Stomach (tissue), 19 donors: ENCODE measurements at regions of chr15 and their contacts with region 1.

Region 1: DNA sequence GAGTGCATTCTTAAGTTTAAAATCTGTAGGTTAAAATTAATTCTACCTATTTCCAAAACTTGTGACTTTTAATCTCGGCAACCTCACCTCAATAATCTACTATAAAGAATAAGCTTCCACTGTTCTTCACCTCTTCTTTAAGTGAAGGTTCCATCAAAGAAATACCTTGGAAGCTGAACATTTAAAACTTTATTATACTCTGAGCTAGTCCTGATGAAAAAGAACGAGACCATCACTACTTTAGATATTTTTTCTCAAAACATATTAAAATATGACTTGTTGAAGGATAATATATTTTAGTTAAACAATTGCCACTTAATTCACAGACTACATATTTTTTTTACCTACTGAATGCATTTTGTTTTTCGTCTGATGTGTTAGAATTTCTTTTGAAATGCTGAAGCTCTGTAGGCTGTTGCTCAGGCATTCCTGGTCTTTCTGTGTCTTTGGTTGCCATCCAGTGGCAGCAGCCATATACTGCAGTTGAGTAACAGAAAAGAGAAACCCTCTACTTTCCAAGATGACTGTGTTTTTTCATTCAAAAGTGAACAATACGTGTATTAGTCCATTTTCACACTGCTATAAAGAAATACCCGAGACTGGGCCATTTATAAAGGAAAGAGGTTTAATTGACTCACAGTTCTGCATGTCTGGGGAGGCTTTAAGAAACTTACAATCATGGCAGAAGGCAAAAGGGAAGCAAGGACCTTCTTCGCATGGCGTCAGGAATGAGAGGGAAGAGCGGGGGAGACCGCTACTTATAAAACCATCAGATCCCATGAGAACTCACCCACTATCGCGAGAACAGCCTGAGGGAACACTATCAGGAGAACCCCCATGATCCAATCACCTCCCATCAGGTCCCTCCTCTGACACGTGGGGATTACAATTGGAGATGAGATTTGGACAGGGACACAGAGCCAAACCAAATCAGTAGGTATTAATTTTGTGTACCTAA is 4.5 kb upstream of the GOLGA8B start:
- DNase-seq: peak; percentile 64 to 79
- H3K4me3 ChIP-seq: peak overlapping the region; percentile 20 to 27 (median 22)
- H3K27ac ChIP-seq: no peak overlapping the region
- H3K4me1 ChIP-seq: peaks cover 5 to 16% (median 12%) of the 10 kb centered on the region in 4 donors
- H3K27me3 ChIP-seq: peaks cover 0 to 14% (median 0%) of the 10 kb centered on the region in 3 donors
- CTCF ChIP-seq: peak in 5 of 7 experiments; percentile 55 to 72 (median 68)
- EP300 ChIP-seq: no peak
- POLR2A ChIP-seq: no peak

Region 2: DNA sequence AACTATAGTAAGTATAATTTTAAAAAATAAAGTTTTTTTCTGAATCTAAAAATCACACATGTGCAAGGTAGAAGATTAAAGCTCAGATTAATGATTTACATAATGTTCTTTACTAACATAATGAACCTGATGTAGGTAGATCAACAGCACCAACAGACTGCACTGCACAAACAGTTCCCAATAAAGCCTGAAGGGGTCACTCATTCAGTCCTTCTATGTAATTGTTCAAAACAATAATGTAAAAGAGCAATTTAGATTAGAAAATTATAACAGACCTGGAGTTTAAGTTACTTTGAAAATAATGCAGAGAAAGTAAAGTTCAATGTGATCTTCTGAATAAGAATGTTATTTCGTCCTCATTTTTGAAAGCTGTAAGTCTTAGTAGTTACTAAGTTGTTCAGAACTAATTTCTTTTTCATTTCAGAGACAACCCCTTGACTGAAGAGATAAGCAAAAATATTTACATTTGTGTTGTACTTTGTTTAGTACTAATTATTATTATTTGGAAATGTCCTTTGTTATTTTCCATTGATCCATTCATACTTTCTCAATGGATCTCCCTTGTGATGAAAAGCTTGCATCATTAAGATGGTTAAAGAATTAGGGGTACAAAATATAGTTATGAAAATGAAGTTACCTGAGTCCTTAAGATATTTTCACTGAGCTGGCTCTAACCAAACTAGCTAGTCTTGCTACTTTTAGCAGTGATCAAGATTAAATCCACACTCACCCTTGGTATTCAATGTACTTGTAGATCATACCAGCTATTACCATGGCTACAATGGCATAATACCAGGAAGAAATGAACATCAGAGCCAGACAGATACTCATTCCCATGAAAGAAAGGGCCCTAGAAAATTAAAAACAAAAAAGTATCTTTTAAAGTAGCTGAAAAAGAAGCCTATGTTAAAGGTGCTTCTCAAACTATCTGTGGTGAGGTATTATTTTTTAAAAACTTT is 346.3 kb before region 1 on chr15:
- intact Hi-C with region 1: loop called (anchors 10 kb)
- DNase-seq: peak in 1 of 2 donors; percentile 70
- H3K4me3 ChIP-seq: no peak overlapping the region
- H3K27ac ChIP-seq: no peak overlapping the region
- H3K4me1 ChIP-seq: no peaks in the 10 kb centered on the region
- H3K27me3 ChIP-seq: no peaks in the 10 kb centered on the region
- CTCF ChIP-seq: peak in 5 of 7 experiments; percentile 57 to 77 (median 70)
- EP300 ChIP-seq: no peak
- POLR2A ChIP-seq: no peak

Region 3: GRCh38 chr15:34342737-34343575 is 245.0 kb before region 1 on chr15 and contains the starts of genes NOP10 and NUTM1:
- intact Hi-C with region 1: loop called (anchors 10 kb)
- DNase-seq: peak; percentile 88 to 97
- H3K4me3 ChIP-seq: peak within 1 kb of the TSS; percentile 60 to 66 (median 64)
- H3K27ac ChIP-seq: peak within 1 kb of the TSS; percentile 77 to 95 (median 90)
- H3K4me1 ChIP-seq: peaks cover 15 to 39% (median 30%) of the 10 kb centered on the region in 4 donors
- H3K27me3 ChIP-seq: no peaks in the 10 kb centered on the region
- CTCF ChIP-seq: peak in 6 of 7 experiments; percentile 64 to 96 (median 92)
- EP300 ChIP-seq: no peak
- POLR2A ChIP-seq: peak in 1 of 4 donors; percentile 69
- total RNA-seq, gene NOP10: 2.9 to 388 (median 118) TPM
- total RNA-seq, gene NUTM1: not detected

Region 4: GRCh38 chr15:34693053-34693744 is 105.2 kb after region 1 on chr15:
- intact Hi-C with region 1: no loop called
- DNase-seq: no peak
- H3K4me3 ChIP-seq: no peak overlapping the region
- H3K27ac ChIP-seq: no peak overlapping the region
- H3K4me1 ChIP-seq: no peaks in the 10 kb centered on the region
- H3K27me3 ChIP-seq: peaks cover 0 to 17% (median 0%) of the 10 kb centered on the region in 3 donors
- CTCF ChIP-seq: no peak
- EP300 ChIP-seq: no peak
- POLR2A ChIP-seq: no peak

Region 5: GRCh38 chr15:34828145-34828911 is 240.3 kb after region 1 on chr15:
- intact Hi-C with region 1: no loop called
- DNase-seq: no peak
- H3K4me3 ChIP-seq: no peak overlapping the region
- H3K27ac ChIP-seq: no peak overlapping the region
- H3K4me1 ChIP-seq: no peaks in the 10 kb centered on the region
- H3K27me3 ChIP-seq: no peaks in the 10 kb centered on the region
- CTCF ChIP-seq: no peak
- EP300 ChIP-seq: no peak
- POLR2A ChIP-seq: no peak